Heart left ventricle (tissue), 16 donors: ENCODE measurements at regions of chr4 and their contacts with region 1.

Region 1: DNA sequence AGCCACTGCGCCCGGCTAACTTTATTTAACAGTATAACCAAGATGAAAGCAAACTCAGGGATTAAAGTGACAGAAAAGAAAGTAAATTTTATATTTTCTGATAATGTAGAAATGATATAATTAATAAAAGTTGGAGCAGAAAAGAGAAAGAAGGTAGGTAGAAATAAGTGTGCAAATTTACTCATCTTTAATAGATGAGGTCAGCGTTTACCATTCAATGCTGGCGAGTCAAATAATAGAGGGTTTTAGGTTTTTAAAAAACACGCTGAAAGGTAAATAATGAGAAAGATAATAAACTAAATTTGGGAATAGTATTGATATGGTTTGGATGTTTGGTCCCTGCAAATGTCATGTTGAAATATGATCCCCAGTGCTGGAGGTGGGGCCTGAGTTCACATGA is 13.6 kb downstream of the CDKN2AIP start:
- DNase-seq: no peak
- ATAC-seq: no peak
- H3K4me3 ChIP-seq: no peak overlapping the region
- H3K27ac ChIP-seq: no peak overlapping the region
- H3K4me1 ChIP-seq: peaks cover 0 to 6% (median 0%) of the 10 kb centered on the region in 12 donors
- H3K27me3 ChIP-seq: no peaks in the 10 kb centered on the region
- CTCF ChIP-seq: no peak
- POLR2A ChIP-seq: no peak

Region 2: DNA sequence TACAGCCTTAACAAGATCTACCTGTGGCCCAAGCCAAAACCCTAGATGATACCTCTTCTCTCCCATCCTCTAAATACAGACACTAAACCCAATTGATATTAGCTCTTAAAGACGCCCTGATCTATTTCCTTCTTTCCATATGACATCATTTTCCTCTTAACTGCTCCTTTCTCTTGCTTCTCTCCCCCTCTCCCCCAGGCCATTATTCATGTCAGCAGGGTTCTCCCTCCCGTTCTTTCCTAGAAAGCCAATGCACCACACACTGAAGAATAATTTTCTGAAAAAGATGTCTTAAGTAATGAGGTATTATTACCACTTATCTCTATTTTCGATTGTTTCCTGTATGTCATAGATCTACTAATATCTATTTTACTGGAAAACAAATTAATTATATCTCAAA is 37.2 kb after region 1 on chr4:
- intact Hi-C with region 1: loop called in 1 of 10 experiments (anchors 2 kb)
- DNase-seq: no peak
- ATAC-seq: no peak
- H3K4me3 ChIP-seq: no peak overlapping the region
- H3K27ac ChIP-seq: no peak overlapping the region
- H3K4me1 ChIP-seq: peaks cover 0 to 8% (median 0%) of the 10 kb centered on the region in 12 donors
- H3K27me3 ChIP-seq: no peaks in the 10 kb centered on the region
- CTCF ChIP-seq: no peak
- POLR2A ChIP-seq: no peak